ENCODE measurements at regions of chr1 and their contacts with region 1.

Region 1: DNA sequence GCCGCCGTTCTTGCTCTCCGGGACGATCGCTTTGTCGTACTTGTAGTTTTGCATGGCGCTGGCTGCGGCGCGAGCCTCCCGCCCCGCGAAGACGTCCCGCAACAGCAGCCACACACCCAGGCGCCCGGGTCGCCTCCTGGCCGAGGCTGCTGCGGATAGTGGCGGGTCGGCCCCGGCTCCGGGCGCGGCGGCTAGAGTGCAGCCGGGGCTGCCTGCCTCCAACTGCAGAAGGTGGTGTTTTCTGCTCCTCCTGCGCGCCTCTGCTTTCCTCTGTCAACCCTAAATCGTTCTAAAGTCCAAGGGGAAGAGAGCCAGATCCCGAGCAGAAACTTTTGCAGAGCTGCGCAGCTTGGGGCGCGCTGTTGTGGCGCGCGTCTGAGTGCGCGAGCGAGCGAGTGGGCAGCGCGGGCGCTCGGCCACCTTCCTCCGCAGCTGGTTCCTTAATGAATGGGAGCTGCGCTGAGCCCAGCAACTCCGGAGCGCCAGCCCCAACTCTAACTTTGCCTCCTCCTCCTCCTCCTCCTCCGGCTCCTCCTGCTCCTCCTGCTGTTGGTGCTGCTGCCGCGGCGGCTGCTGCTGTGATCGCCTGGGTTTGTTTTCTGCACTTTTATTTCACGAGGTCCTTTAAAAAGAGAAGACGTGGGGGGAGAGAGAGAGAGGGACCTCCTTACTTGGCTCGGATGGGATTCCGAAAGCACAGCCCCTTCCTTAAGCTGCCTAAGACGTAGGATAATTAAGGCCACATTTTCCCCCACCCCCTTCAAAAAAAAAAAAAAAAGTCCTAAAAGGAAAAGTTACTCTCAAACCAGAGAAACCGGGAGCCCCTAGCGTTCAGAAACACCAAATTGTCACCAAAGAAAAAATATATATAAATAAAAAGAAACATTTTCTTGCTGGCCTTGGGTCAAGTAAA is at the start of gene PLPP3:
- DNase-seq: peak; percentile 91
- total RNA-seq, gene PLPP3: 61.0 TPM

Region 2: DNA sequence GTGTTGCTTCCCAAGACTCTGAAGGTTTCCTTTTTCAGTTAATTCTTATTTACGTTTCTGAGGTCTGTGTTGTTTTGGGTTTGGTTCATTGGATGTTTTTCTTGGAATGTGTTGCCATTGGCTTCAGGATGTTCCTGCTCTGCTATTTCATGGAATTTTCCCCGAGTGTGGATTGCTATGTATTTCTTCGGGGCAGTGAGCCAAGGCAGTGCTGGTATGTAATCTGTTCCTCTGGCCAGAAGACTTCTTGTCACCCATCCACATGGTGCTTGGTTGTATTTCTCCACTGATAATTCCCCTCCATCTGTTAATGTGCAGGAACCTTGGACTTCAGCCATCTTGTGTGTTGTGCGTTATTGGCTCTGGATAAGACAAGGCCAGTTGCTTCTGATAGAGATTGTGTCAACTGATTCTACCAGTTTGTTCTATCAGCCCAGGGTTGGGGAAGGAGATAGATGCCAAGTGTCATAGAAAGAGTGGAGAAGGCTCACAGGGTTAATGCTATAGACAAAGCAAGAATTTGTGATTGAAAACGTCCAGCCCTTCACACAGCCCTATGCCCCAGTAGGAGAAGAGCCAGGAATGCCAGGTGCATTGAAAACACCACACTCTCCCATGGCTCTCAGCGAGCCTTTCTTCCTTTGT is 505.1 kb before region 1 on chr1:
- intact Hi-C with region 1: loop called (anchors 5 kb)
- DNase-seq: no peak

Region 3: DNA sequence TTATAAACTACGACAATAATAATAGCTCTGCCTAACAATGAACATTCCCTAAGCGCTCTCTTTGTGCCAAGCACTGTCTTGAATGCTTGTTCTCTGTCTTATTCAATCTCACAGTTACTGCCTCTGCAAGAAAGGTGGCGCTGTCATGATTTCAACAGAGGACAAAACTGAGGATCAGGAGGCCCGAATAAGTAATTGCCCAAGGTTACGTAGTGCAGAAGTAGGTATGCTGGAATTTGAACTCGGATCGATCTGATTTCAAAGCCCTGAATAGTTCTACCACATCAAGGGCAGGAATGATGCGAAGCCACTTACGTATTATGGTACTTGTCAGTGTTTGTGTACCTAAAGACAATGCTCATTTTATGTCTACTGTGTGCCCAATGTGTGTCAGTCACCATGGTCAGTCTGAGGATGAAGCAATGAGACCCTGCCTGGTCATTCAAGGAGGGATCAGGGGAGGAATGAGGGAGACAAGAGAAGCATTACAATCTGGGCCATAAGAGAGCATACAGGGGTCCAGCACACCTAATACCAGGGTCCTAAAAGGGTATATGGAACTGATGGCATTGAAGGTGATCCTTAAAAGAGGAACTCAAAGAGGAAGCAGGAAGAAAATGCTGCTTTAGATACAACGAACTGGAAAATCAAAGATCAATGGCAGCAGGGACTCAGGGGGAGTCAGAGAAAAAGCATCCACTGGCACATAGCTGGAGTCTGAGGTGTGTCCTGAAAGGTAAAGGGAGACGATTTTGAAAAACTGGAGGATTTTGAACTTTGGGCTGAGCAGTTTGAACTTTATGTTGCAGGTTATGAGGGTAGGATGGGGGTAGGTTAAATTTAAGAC is 389.1 kb before region 1 on chr1:
- intact Hi-C with region 1: loop called (anchors 5 kb)
- DNase-seq: no peak

Region 4: DNA sequence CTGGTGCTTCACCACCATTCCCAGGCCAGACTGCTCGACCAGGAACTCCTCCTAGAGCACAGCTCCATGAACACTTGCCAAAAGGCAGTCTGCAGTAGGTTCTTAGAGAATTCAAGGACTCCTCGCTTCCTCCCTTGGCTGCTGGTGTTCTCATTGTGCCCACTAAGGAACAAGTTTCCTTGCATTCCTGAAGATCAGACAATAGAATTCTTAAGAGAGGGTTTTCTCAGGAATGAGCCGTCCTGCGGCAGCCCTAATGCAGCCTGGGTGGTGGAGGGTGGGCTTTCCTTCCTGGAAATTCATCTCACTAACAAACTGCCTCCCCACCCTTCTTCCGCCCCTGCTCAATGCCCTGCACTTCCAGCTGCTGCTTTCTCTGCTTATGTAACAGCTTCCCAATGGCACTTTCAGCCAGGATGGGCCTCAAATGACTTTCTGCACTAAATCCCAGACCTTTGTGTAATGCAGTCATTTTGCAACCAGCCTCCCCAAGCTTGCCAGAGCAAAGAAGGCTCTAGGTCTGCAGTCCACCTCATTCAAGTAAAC is 287.8 kb before region 1 on chr1:
- intact Hi-C with region 1: loop called (anchors 5 kb)
- DNase-seq: peak; percentile 83

Region 5: GRCh38 chr1:56409094-56409691 is 170.0 kb before region 1 on chr1:
- intact Hi-C with region 1: loop called (anchors 2 kb)
- DNase-seq: no peak

Region 6: GRCh38 chr1:56508523-56508983 is 70.7 kb before region 1 on chr1:
- intact Hi-C with region 1: loop called (anchors 5 kb)
- DNase-seq: peak; percentile 86

Region 7: GRCh38 chr1:56726706-56727105 is 147.5 kb after region 1 on chr1:
- intact Hi-C with region 1: no loop called
- DNase-seq: no peak

Measured in cardiac septum (tissue), 1 donor.